GM12878 (cell line): ENCODE measurements at regions of chr20 and their contacts with region 1.

Region 1: DNA sequence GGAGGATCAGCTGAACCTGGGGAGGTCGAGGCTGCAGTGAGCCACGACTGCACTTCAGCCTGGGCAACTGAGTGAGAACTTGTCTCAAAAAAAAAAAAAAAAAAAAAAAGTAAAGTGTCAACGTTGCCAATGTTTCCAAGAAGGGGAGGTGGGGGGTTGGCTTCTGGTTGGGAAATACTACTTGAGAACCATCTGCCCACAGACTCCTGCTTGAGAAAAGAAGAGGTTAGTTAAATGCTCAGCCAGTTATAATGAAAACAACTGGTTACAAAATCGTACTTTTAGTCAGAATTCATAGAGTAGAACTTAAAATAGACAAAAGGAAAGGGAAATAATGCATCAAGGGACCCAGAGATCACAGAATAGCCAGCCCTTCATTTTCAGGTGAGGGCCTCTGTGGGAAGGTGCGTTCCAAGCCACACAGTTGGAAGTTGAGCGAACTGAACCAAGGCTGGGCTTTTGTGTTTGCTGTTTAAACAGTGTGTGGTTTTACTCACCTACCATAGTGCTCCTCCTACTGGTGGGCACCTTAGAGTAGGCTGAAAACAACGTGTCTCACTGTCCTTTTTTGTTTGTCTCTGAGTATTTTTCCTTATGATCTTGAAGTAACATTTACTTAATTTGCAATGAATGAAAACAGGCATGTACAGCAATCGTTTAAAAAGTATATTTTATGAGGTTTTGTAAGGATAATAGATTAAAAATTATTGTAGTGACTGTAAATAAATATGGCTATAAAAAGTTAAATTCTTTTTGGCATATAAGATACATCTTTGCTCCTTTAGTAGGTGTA is 200.7 kb downstream of the BCAS1 start:
- DNase-seq: peak; percentile 91
- ATAC-seq: peak; percentile 73
- H3K4me3 ChIP-seq: no peak overlapping the region
- H3K27ac ChIP-seq: peak overlapping the region; percentile 68
- H3K4me1 ChIP-seq: peaks cover 51% of the 10 kb centered on the region
- H3K27me3 ChIP-seq: no peaks in the 10 kb centered on the region
- CTCF ChIP-seq: peak; percentile 85 to 93 (median 87)
- EP300 ChIP-seq: peak in 1 of 2 experiments; percentile 61; a peak in 2 of 4 replicates
- POLR2A ChIP-seq: no peak
- RAD21 ChIP-seq: peak; percentile 86

Region 2: DNA sequence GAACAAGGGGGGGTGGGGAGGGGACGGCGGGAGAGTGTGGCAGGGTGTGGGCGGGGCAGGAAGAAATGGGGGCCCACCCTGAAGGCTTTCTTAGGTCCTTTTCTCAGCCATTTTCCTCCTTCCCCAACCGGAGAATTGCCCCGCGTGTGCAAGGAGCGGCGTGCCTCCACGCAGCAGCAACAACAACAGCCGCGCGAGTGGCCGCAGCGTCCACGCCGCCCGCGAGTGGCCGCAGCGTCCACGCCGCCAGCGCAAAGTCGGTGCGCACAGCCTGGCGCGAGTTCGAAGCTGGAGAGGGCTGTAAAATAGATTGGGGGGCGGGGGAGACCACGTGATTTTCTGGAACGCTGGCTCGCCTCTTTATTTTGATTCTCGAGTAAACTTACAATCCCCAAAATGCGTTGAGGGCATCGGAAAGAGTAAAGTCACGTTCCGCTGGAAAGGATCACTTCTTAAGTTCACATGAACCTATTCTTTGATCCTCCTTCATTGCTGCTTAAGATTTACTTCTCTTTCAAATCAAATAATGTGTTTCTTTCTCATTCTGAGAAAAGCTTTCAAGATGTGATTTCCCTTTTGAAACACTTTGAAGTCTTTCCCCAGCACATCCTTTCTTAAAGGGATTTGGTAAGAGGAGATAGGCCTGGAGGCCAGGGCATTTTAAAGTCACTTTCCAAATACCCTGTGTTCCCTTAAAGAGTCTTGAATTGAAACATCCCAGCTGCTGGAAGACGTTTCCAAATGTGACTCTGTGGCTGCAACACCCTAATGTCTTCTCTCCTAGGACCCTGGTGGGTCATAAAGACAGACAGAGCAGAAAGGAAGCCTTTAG is 209.4 kb before region 1 on chr20:
- CTCF ChIA-PET with region 1: interaction called, 3 read pairs
- POLR2A ChIA-PET with region 1: interaction called, 4 read pairs
- RAD21 ChIA-PET with region 1: interaction called, 10 read pairs
- SMC1A ChIA-PET with region 1: interaction called, 6 read pairs
- in situ Hi-C with region 1: no loop called
- intact Hi-C with region 1: no loop called
- DNase-seq: no peak
- ATAC-seq: peak; percentile 27
- H3K4me3 ChIP-seq: peak overlapping the region; percentile 63
- H3K27ac ChIP-seq: peak overlapping the region; percentile 84
- H3K4me1 ChIP-seq: peaks cover 61% of the 10 kb centered on the region
- H3K27me3 ChIP-seq: no peaks in the 10 kb centered on the region
- CTCF ChIP-seq: no peak
- EP300 ChIP-seq: no peak; a peak in 1 of 4 replicates
- POLR2A ChIP-seq: peak; percentile 41; the same call in 1 of the 2 replicates
- RAD21 ChIP-seq: 0 out of 2 replicates have a peak, but pooled peaks have one; percentile 4

Region 3: DNA sequence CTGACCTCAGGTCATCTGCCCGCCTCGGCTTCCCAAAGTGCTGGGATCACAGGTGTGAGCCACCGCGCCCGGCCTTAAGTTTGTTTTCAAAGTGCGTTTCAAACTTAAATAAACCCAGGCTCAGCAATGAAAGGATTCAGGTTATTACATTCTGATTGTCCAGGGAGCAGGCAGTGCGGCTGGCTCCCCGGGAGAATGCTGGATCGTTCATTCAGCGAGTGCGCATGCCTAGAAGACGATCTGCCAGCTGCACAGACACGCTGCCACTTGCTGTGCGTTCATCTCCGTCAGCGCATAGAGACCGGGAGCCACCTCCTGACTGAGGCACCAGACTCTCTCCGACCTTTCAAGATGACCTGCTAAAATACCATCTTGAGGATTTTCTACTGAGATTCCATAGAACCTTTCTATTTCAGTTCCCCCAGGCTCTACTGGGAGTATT is 112.2 kb before region 1 on chr20:
- CTCF ChIA-PET with region 1: interaction called, 7 read pairs
- POLR2A ChIA-PET with region 1: interaction called, 3 read pairs
- RAD21 ChIA-PET with region 1: interaction called, 30 read pairs
- SMC1A ChIA-PET with region 1: interaction called, 20 read pairs
- in situ Hi-C with region 1: no loop called
- intact Hi-C with region 1: loop called (anchors 5 kb)
- DNase-seq: no peak
- ATAC-seq: no peak
- H3K4me3 ChIP-seq: no peak overlapping the region
- H3K27ac ChIP-seq: no peak overlapping the region
- H3K4me1 ChIP-seq: peaks cover 28% of the 10 kb centered on the region
- H3K27me3 ChIP-seq: no peaks in the 10 kb centered on the region
- CTCF ChIP-seq: no peak
- EP300 ChIP-seq: no peak
- POLR2A ChIP-seq: no peak
- RAD21 ChIP-seq: no peak

Region 4: GRCh38 chr20:53847129-53847836 is 22.4 kb before region 1 on chr20:
- CTCF ChIA-PET with region 1: interaction called, 11 read pairs
- POLR2A ChIA-PET with region 1: interaction called, 8 read pairs
- RAD21 ChIA-PET with region 1: interaction called, 26 read pairs
- SMC1A ChIA-PET with region 1: interaction called, 133 read pairs
- in situ Hi-C with region 1: no loop called
- intact Hi-C with region 1: no loop called
- DNase-seq: no peak
- ATAC-seq: peak; percentile 58
- H3K4me3 ChIP-seq: no peak overlapping the region; the same call in 1 of the 2 replicates
- H3K27ac ChIP-seq: peak overlapping the region; percentile 79
- H3K4me1 ChIP-seq: peaks cover 26% of the 10 kb centered on the region
- H3K27me3 ChIP-seq: no peaks in the 10 kb centered on the region
- CTCF ChIP-seq: no peak
- EP300 ChIP-seq: no peak
- POLR2A ChIP-seq: no peak
- RAD21 ChIP-seq: no peak

Region 5: GRCh38 chr20:53899351-53900167 is 29.9 kb after region 1 on chr20:
- CTCF ChIA-PET with region 1: interaction called, 34 read pairs
- POLR2A ChIA-PET with region 1: interaction called, 10 read pairs
- RAD21 ChIA-PET with region 1: interaction called, 33 read pairs
- SMC1A ChIA-PET with region 1: interaction called, 47 read pairs
- in situ Hi-C with region 1: no loop called
- intact Hi-C with region 1: no loop called
- DNase-seq: peak; percentile 95
- ATAC-seq: peak; percentile 88
- H3K4me3 ChIP-seq: no peak overlapping the region
- H3K27ac ChIP-seq: peak overlapping the region; percentile 62
- H3K4me1 ChIP-seq: peaks cover 39% of the 10 kb centered on the region
- H3K27me3 ChIP-seq: no peaks in the 10 kb centered on the region
- CTCF ChIP-seq: no peak
- EP300 ChIP-seq: peak in 1 of 2 experiments; percentile 74; a peak in 2 of 4 replicates
- POLR2A ChIP-seq: no peak
- RAD21 ChIP-seq: no peak

Region 6: DNA sequence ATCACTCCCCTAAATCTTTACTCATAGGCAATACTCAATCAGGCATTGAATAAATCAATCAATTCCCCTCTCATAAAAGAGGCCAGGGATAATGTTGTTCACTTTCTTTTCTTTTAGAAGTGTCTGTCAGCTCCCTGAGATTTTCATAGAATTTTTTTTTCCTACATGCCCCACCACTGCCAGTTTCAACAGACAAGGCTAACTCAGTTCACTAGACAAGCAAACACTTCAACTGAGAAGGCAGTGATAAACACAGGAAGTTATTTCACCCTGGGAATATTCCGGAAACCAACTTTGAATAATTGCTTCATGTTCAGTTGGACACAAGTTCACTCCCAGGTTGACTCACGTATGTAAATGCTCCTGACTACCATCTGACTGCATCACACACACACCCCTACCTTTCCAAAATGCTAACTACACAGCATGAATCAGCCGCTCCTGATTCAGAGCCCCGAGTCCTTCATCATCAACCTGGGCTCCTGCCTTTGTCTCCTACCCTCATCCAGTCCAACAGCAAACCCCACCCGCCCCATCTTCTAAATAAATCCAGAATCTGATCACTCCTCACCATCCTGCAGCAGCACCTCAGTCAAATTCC is 56.9 kb after region 1 on chr20:
- CTCF ChIA-PET with region 1: no interaction called
- POLR2A ChIA-PET with region 1: interaction called, 3 read pairs
- RAD21 ChIA-PET with region 1: interaction called, 11 read pairs
- SMC1A ChIA-PET with region 1: interaction called, 26 read pairs
- in situ Hi-C with region 1: no loop called
- intact Hi-C with region 1: no loop called
- DNase-seq: peak; percentile 99
- ATAC-seq: peak; percentile 80
- H3K4me3 ChIP-seq: peak overlapping the region; percentile 52
- H3K27ac ChIP-seq: peak overlapping the region; percentile 85
- H3K4me1 ChIP-seq: peaks cover 87% of the 10 kb centered on the region
- H3K27me3 ChIP-seq: no peaks in the 10 kb centered on the region
- CTCF ChIP-seq: no peak
- EP300 ChIP-seq: peak; percentile 80 to 82
- POLR2A ChIP-seq: peak; percentile 67
- RAD21 ChIP-seq: no peak

Region 7: DNA sequence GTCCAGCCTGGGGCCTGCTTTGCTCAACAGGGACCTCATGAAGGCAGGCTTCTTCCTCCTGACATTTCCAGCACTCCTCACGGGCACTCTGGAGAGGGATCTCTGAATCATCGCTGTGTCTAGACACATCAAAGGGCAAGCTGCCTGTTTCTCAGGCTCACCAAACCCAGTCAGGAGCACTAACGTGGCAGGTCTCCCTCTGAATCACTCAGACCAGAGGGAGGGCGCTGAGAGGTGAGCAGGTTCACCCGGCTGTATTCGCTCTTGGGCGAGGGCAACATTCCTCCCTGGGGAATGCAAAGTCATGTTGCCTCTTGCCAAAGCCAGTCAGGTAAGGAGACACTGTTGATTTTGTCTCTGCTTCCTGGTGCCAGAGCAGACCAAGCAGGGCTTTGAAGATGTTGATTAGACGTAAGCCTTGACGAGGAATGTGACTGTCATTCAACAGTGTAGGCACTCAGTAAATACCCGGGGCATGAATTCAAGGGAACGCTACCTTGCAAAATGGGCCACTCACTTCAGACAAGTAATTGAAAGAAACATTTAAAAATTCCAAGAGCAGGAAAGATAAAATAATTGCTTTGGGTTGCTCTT is 254.0 kb after region 1 on chr20:
- CTCF ChIA-PET with region 1: no interaction called
- POLR2A ChIA-PET with region 1: no interaction called
- RAD21 ChIA-PET with region 1: no interaction called
- SMC1A ChIA-PET with region 1: no interaction called
- in situ Hi-C with region 1: no loop called
- intact Hi-C with region 1: no loop called
- DNase-seq: no peak
- ATAC-seq: no peak
- H3K4me3 ChIP-seq: no peak overlapping the region
- H3K27ac ChIP-seq: no peak overlapping the region
- H3K4me1 ChIP-seq: no peaks in the 10 kb centered on the region
- H3K27me3 ChIP-seq: no peaks in the 10 kb centered on the region
- CTCF ChIP-seq: no peak
- EP300 ChIP-seq: no peak
- POLR2A ChIP-seq: no peak
- RAD21 ChIP-seq: no peak